Activated B cell treated with CpG ODN at 0.5 μM for 24 hours (primary cell): ENCODE measurements at regions of chr3 and their contacts with region 1.

Region 1: GRCh38 chr3:47324278-47324865 is 41.6 kb downstream of the KLHL18 start:
- DNase-seq: no peak
- ATAC-seq: peak; percentile 65
- H3K4me3 Mint-ChIP-seq: no peak overlapping the region
- H3K27ac Mint-ChIP-seq: no peak overlapping the region
- H3K4me1 Mint-ChIP-seq: no peaks in the 10 kb centered on the region
- H3K27me3 Mint-ChIP-seq: no peaks in the 10 kb centered on the region
- CTCF ChIP-seq: peak; percentile 56

Region 2: GRCh38 chr3:46866720-46867549 is 457.4 kb before region 1 on chr3:
- CTCF ChIA-PET with region 1: interaction called, 4 read pairs
- POLR2A ChIA-PET with region 1: no interaction called
- intact Hi-C with region 1: loop called (anchors 2 kb)
- DNase-seq: peak; percentile 75
- ATAC-seq: peak; percentile 76
- H3K4me3 Mint-ChIP-seq: no peak overlapping the region
- H3K27ac Mint-ChIP-seq: no peak overlapping the region
- H3K4me1 Mint-ChIP-seq: no peaks in the 10 kb centered on the region
- H3K27me3 Mint-ChIP-seq: peaks cover 7% of the 10 kb centered on the region
- CTCF ChIP-seq: peak; percentile 33

Region 3: GRCh38 chr3:47009225-47010110 is 314.9 kb before region 1 on chr3:
- CTCF ChIA-PET with region 1: no interaction called
- POLR2A ChIA-PET with region 1: no interaction called
- intact Hi-C with region 1: loop called (anchors 10 kb)
- DNase-seq: peak; percentile 82
- ATAC-seq: peak; percentile 97
- H3K4me3 Mint-ChIP-seq: peak overlapping the region; percentile 81
- H3K27ac Mint-ChIP-seq: peak overlapping the region; percentile 73
- H3K4me1 Mint-ChIP-seq: peaks cover 13% of the 10 kb centered on the region
- H3K27me3 Mint-ChIP-seq: no peaks in the 10 kb centered on the region
- CTCF ChIP-seq: no peak

Region 4: GRCh38 chr3:47113669-47114365 is 210.6 kb before region 1 on chr3:
- CTCF ChIA-PET with region 1: no interaction called
- POLR2A ChIA-PET with region 1: no interaction called
- intact Hi-C with region 1: loop called (anchors 2 kb)
- DNase-seq: no peak
- ATAC-seq: peak; percentile 82
- H3K4me3 Mint-ChIP-seq: peak overlapping the region; percentile 21
- H3K27ac Mint-ChIP-seq: peak overlapping the region; percentile 36
- H3K4me1 Mint-ChIP-seq: peaks cover 26% of the 10 kb centered on the region
- H3K27me3 Mint-ChIP-seq: no peaks in the 10 kb centered on the region
- CTCF ChIP-seq: no peak

Region 5: GRCh38 chr3:47282424-47283192 is 41.8 kb before region 1 on chr3 and contains the starts of genes KIF9 and KLHL18:
- CTCF ChIA-PET with region 1: interaction called, 6 read pairs
- POLR2A ChIA-PET with region 1: no interaction called
- intact Hi-C with region 1: loop called (anchors 1 kb)
- DNase-seq: peak; percentile 93
- ATAC-seq: peak; percentile 82
- H3K4me3 Mint-ChIP-seq: peak within 1 kb of the TSS; percentile 100
- H3K27ac Mint-ChIP-seq: peak within 1 kb of the TSS; percentile 99
- H3K4me1 Mint-ChIP-seq: peaks cover 53% of the 10 kb centered on the region
- H3K27me3 Mint-ChIP-seq: no peaks in the 10 kb centered on the region
- CTCF ChIP-seq: no peak
- total RNA-seq, gene KIF9: 2.3 and 2.5 TPM in 2 replicates
- total RNA-seq, gene KLHL18: 36.6 and 38.0 TPM in 2 replicates